Activated CD4-positive, alpha-beta memory T cell treated with anti-CD3 and anti-CD28 coated beads for 36 hours (primary cell): ENCODE measurements at regions of chr9 and their contacts with region 1.

Region 1: DNA sequence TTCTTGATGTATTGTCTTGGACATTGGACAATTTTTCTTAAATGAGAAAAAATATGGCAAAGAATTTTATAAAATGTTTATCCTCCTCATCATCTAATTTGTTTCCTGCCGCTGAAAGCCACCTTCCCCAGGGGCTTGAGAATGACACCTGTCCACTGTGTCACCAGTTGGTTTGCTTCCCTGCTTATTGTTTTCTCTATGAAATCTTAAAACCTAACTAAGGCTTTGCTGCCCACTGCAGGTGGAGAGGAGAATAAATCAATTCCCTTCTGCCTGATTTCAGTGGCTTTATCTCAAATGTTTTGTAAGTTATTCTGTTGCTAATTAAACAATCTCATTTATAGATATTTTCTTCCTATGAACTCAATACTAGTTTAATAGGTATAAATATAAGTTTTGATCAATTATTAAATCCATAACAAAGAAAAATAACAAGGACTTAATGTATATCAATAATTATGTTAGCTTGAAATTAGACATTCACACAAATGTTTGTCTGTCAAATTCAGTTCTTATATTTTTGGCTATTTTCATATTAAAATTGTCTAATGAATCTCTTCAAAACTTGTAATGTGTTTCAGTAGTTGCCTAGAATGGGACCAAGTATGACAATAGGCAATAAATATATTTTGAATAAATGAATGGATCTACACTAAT is 822.5 kb downstream of the PTPRD start:
- DNase-seq: no peak
- H3K4me3 Mint-ChIP-seq: no peak overlapping the region
- H3K27ac Mint-ChIP-seq: no peak overlapping the region
- H3K4me1 Mint-ChIP-seq: no peaks in the 10 kb centered on the region
- H3K27me3 Mint-ChIP-seq: no peaks in the 10 kb centered on the region

Region 2: DNA sequence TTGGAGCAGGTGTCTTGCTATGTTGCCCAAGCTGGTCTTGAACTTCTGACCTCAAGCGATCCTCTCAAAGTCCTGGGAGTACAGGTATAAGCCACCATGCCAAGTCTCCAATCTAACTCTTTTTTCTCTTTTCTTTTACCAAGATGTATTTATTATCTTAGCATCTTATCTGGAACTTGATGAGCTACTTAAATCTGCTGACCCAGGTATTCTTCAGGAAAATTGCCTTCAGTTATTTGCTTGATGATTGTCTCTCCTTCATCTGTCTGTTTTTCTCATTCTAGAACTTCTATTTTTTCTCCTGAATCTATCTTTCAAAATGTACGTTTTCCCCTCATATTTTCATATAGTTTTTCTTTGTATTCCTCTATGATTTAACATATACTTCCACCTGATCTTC is 1832.5 kb before region 1 on chr9:
- CTCF ChIA-PET with region 1: no interaction called
- POLR2A ChIA-PET with region 1: no interaction called
- intact Hi-C with region 1: loop called (anchors 10 kb)
- DNase-seq: no peak
- H3K4me3 Mint-ChIP-seq: no peak overlapping the region
- H3K27ac Mint-ChIP-seq: no peak overlapping the region
- H3K4me1 Mint-ChIP-seq: no peaks in the 10 kb centered on the region
- H3K27me3 Mint-ChIP-seq: no peaks in the 10 kb centered on the region

Region 3: GRCh38 chr9:8419596-8420275 is 1370.6 kb before region 1 on chr9:
- CTCF ChIA-PET with region 1: no interaction called
- POLR2A ChIA-PET with region 1: no interaction called
- intact Hi-C with region 1: loop called (anchors 10 kb)
- DNase-seq: no peak
- H3K4me3 Mint-ChIP-seq: no peak overlapping the region
- H3K27ac Mint-ChIP-seq: no peak overlapping the region
- H3K4me1 Mint-ChIP-seq: no peaks in the 10 kb centered on the region
- H3K27me3 Mint-ChIP-seq: peaks cover 3% of the 10 kb centered on the region

Region 4: GRCh38 chr9:9605681-9606080 is 184.7 kb before region 1 on chr9:
- CTCF ChIA-PET with region 1: no interaction called
- POLR2A ChIA-PET with region 1: no interaction called
- intact Hi-C with region 1: loop called (anchors 1 kb)
- DNase-seq: no peak
- H3K4me3 Mint-ChIP-seq: no peak overlapping the region
- H3K27ac Mint-ChIP-seq: no peak overlapping the region
- H3K4me1 Mint-ChIP-seq: no peaks in the 10 kb centered on the region
- H3K27me3 Mint-ChIP-seq: no peaks in the 10 kb centered on the region